ENCODE measurements at regions of chr6 and their contacts with region 1.

Region 1: GRCh38 chr6:157764178-157765033 is 58.6 kb upstream of the SNX9 start:
- DNase-seq: peak; percentile 73
- ATAC-seq: peak; percentile 43
- H3K4me3 Mint-ChIP-seq: peak overlapping the region; percentile 81
- H3K27ac Mint-ChIP-seq: peak overlapping the region; percentile 99
- H3K4me1 Mint-ChIP-seq: peaks cover 95% of the 10 kb centered on the region
- H3K27me3 Mint-ChIP-seq: no peaks in the 10 kb centered on the region
- CTCF ChIP-seq: no peak

Region 2: DNA sequence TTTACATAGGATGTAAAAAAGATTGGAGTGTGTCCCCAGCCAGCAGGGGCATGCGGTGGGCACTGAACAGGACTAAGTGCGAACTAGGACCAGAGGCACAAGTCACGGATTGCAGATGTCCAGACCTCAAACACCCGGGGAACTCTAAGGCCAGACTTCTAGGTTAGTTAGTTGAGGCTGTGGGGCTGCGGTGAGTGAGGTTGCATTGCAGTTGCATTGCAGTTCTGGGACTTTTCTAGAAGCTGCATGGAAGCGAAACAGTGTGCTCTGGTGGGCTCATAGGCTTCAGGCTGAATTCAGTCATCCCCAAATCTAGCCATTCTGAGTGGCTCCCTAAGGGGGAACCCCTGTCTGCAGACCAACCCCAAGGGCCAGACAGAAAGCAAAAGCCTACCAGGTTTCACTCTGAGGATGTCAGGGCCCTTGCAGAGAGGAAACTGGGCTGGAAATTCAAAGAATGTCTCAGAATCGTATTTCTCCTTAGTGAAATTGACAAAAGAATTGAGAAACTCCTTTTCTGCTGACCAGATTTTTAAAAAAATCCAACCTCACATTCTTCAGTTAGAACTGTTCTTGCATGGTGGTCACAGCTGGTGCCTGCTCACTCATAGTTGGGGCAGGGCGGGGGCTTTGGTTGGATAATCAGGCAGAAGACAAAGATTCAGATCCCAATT is 200.7 kb before region 1 on chr6:
- CTCF ChIA-PET with region 1: no interaction called
- POLR2A ChIA-PET with region 1: interaction called, 3 read pairs
- intact Hi-C with region 1: loop called (anchors 5 kb)
- DNase-seq: no peak
- ATAC-seq: peak; percentile 69
- H3K4me3 Mint-ChIP-seq: peak overlapping the region; percentile 44
- H3K27ac Mint-ChIP-seq: peak overlapping the region; percentile 80
- H3K4me1 Mint-ChIP-seq: peaks cover 92% of the 10 kb centered on the region
- H3K27me3 Mint-ChIP-seq: no peaks in the 10 kb centered on the region
- CTCF ChIP-seq: no peak

Region 3: DNA sequence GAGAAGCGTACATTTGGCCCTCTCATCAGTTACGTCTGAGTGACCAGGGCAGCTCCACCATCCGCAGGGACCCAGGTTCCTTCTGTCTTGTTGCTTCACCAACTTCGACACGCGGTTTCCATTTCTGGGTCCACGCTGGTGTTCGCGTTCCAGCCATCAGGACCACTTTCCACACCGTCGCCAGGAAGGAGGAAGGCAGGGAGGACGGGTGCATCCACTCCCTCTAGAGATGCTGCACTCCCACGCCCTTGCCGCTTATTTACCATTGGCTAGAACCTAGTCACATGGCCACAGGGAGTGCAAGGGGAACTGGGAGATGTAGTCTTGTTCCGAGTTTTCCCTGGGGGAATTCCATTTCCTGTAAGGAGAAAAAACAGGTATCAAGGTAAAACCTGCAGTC is 25.5 kb after region 1 on chr6:
- CTCF ChIA-PET with region 1: no interaction called
- POLR2A ChIA-PET with region 1: no interaction called
- intact Hi-C with region 1: no loop called
- DNase-seq: no peak
- ATAC-seq: no peak
- H3K4me3 Mint-ChIP-seq: no peak overlapping the region
- H3K27ac Mint-ChIP-seq: no peak overlapping the region
- H3K4me1 Mint-ChIP-seq: peaks cover 4% of the 10 kb centered on the region
- H3K27me3 Mint-ChIP-seq: no peaks in the 10 kb centered on the region
- CTCF ChIP-seq: no peak

Region 4: GRCh38 chr6:157823001-157823527 is 58.7 kb after region 1 on chr6 and contains the start of gene SNX9:
- CTCF ChIA-PET with region 1: no interaction called
- POLR2A ChIA-PET with region 1: interaction called, 12 read pairs
- intact Hi-C with region 1: loop called (anchors 1 kb)
- DNase-seq: peak; percentile 70
- ATAC-seq: peak; percentile 65
- H3K4me3 Mint-ChIP-seq: peak within 1 kb of the TSS; percentile 95
- H3K27ac Mint-ChIP-seq: peak within 1 kb of the TSS; percentile 98
- H3K4me1 Mint-ChIP-seq: peaks cover 47% of the 10 kb centered on the region
- H3K27me3 Mint-ChIP-seq: no peaks in the 10 kb centered on the region
- CTCF ChIP-seq: no peak
- total RNA-seq, gene SNX9: 38.8 and 40.0 TPM in 2 replicates

Region 5: DNA sequence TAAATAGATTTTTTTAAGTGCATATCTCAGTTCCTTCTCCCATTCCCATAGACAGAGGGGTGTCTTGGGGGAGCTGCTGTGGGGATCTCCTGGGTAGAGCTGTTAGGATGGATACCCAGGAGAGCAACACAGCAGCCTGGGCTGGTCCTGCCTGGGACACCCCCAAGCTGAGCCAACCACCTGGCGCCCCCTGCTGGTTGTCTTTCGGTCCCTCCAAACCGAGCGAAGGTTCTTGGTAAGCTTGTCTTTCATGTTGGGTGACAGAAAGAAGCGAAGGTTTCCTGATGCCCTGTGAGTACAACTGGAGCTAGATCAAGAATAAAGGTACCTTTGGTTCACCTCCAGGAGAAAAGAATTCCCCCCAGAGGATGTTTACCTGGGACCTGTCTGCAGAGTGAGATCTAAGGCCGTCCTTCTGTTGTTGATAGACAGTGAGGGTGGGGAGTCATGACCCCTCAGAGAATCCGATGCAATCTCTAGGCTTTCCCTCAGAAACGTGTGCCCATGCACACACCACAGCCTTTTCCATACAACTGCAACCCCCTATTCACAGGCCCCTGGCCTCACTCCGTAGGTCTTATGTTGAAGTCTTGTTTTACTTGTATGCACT is 109.4 kb after region 1 on chr6:
- CTCF ChIA-PET with region 1: interaction called, 250 read pairs
- POLR2A ChIA-PET with region 1: interaction called, 5 read pairs
- intact Hi-C with region 1: no loop called
- DNase-seq: peak; percentile 73
- ATAC-seq: peak; percentile 87
- H3K4me3 Mint-ChIP-seq: no peak overlapping the region
- H3K27ac Mint-ChIP-seq: no peak overlapping the region
- H3K4me1 Mint-ChIP-seq: peaks cover 26% of the 10 kb centered on the region
- H3K27me3 Mint-ChIP-seq: no peaks in the 10 kb centered on the region
- CTCF ChIP-seq: peak; percentile 63

Region 6: GRCh38 chr6:157981395-157982296 is 217.2 kb after region 1 on chr6 and contains the start of gene SYNJ2:
- CTCF ChIA-PET with region 1: no interaction called
- POLR2A ChIA-PET with region 1: interaction called, 3 read pairs
- intact Hi-C with region 1: loop called (anchors 5 kb)
- DNase-seq: peak; percentile 78
- ATAC-seq: peak; percentile 86
- H3K4me3 Mint-ChIP-seq: peak within 1 kb of the TSS; percentile 89
- H3K27ac Mint-ChIP-seq: peak within 1 kb of the TSS; percentile 77
- H3K4me1 Mint-ChIP-seq: peaks cover 43% of the 10 kb centered on the region
- H3K27me3 Mint-ChIP-seq: no peaks in the 10 kb centered on the region
- CTCF ChIP-seq: no peak
- total RNA-seq, gene SYNJ2: 20.7 and 25.0 TPM in 2 replicates

Region 7: GRCh38 chr6:158168040-158168289 is 403.6 kb after region 1 on chr6 and contains the start of gene SERAC1:
- CTCF ChIA-PET with region 1: no interaction called
- POLR2A ChIA-PET with region 1: no interaction called
- intact Hi-C with region 1: loop called (anchors 10 kb)
- DNase-seq: no peak
- ATAC-seq: peak; percentile 53
- H3K4me3 Mint-ChIP-seq: peak within 1 kb of the TSS; percentile 95
- H3K27ac Mint-ChIP-seq: peak within 1 kb of the TSS; percentile 99
- H3K4me1 Mint-ChIP-seq: peaks cover 14% of the 10 kb centered on the region
- H3K27me3 Mint-ChIP-seq: no peaks in the 10 kb centered on the region
- CTCF ChIP-seq: no peak
- total RNA-seq, gene SERAC1: 3.0 TPM in 2 replicates

Measured in activated B cell treated with CpG ODN at 0.5 μM for 24 hours (primary cell).